BJ (cell line): ENCODE measurements at regions of chr12 and their contacts with region 1.

Region 1: DNA sequence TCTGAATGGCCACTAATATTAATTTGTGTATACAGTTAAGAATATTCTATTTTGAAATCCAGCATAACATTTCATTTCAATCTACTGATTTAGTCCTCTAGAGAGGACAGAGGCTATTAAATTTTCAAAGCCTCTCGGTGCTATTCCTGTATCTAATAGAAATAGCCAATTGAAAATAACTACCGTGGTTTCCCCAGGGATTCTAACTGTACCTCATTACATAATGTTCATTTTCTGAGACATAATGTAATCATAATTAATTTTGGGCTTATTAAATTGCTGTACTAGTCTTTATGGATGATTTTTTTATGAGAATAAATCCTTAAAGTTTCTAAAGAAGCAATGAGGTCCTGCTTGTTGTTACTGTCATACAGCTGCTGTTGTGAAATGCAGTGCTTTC is 38.6 kb upstream of the ACSS3 start:
- DNase-seq: no peak
- H3K4me3 ChIP-seq: no peak overlapping the region
- H3K27me3 ChIP-seq: no peaks in the 10 kb centered on the region
- CTCF ChIP-seq: no peak

Region 2: GRCh38 chr12:79933532-79934264 is 1105.5 kb before region 1 on chr12:
- CTCF ChIA-PET with region 1: no interaction called
- POLR2A ChIA-PET with region 1: interaction called, 12 read pairs
- DNase-seq: no peak
- H3K4me3 ChIP-seq: peak overlapping the region; percentile 100
- H3K27me3 ChIP-seq: no peaks in the 10 kb centered on the region
- CTCF ChIP-seq: no peak